Psoas muscle (tissue), 8 donors: ENCODE measurements at regions of chr3 and their contacts with region 1.

Region 1: DNA sequence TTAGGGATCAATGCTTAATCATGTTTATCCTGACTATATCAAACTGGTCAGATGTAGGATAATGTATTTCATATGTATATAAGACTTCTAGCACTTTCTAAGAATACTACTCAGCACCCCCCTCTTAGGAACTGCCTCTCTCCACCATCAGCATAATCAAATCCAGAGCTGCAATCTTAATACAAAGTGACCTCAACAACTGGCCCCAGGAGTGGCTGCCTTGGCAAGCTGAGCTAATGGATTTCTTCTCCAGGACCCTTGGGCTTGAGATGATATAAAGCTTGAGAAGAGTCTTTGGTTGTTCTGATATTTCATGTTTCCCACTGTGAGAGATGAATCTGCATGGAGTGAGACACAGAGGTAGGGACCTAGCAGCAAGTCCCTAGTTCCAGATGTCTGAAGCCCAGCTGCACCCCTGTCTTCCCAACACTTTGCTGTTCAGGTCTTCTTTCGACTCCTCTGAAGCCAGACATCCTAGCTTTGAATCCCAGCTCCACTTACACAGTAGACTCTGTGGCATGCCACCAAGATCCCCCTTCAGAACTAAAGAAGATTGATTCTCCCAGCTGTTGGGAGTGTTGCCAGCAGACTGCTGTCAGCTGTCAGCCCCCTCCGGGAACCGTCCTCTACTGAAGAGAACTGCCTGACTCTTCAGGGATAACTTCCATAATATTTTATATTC is 309.3 kb upstream of the UBE2E2 start:
- DNase-seq: no peak
- ATAC-seq: peak; percentile 10 to 53 (median 36)
- H3K4me3 ChIP-seq: no peak overlapping the region
- H3K27ac ChIP-seq: no peak overlapping the region
- H3K4me1 ChIP-seq: peaks cover 7% of the 10 kb centered on the region
- H3K27me3 ChIP-seq: peaks cover 0 to 2% (median 0%) of the 10 kb centered on the region in 3 donors
- CTCF ChIP-seq: no peak

Region 2: GRCh38 chr3:22555753-22556435 is 337.9 kb before region 1 on chr3:
- intact Hi-C with region 1: loop called in 1 of 2 experiments (anchors 5 kb)
- DNase-seq: no peak
- ATAC-seq: no peak
- H3K4me3 ChIP-seq: no peak overlapping the region
- H3K27ac ChIP-seq: no peak overlapping the region
- H3K4me1 ChIP-seq: no peaks in the 10 kb centered on the region
- H3K27me3 ChIP-seq: no peaks in the 10 kb centered on the region
- CTCF ChIP-seq: no peak

Region 3: GRCh38 chr3:22779737-22780136 is 114.0 kb before region 1 on chr3:
- intact Hi-C with region 1: no loop called
- DNase-seq: no peak
- ATAC-seq: no peak
- H3K4me3 ChIP-seq: no peak overlapping the region
- H3K27ac ChIP-seq: no peak overlapping the region
- H3K4me1 ChIP-seq: no peaks in the 10 kb centered on the region
- H3K27me3 ChIP-seq: no peaks in the 10 kb centered on the region
- CTCF ChIP-seq: no peak

Region 4: GRCh38 chr3:23017780-23018179 is 124.0 kb after region 1 on chr3:
- intact Hi-C with region 1: no loop called
- DNase-seq: no peak
- ATAC-seq: no peak
- H3K4me3 ChIP-seq: no peak overlapping the region
- H3K27ac ChIP-seq: no peak overlapping the region
- H3K4me1 ChIP-seq: peaks cover 9% of the 10 kb centered on the region
- H3K27me3 ChIP-seq: no peaks in the 10 kb centered on the region
- CTCF ChIP-seq: no peak

Region 5: GRCh38 chr3:23294770-23295387 is 401.1 kb after region 1 on chr3:
- intact Hi-C with region 1: no loop called
- DNase-seq: no peak
- ATAC-seq: no peak
- H3K4me3 ChIP-seq: no peak overlapping the region
- H3K27ac ChIP-seq: no peak overlapping the region
- H3K4me1 ChIP-seq: no peaks in the 10 kb centered on the region
- H3K27me3 ChIP-seq: no peaks in the 10 kb centered on the region
- CTCF ChIP-seq: no peak